PC-9 (cell line): ENCODE measurements at regions of chr18 and their contacts with region 1.

Region 1: DNA sequence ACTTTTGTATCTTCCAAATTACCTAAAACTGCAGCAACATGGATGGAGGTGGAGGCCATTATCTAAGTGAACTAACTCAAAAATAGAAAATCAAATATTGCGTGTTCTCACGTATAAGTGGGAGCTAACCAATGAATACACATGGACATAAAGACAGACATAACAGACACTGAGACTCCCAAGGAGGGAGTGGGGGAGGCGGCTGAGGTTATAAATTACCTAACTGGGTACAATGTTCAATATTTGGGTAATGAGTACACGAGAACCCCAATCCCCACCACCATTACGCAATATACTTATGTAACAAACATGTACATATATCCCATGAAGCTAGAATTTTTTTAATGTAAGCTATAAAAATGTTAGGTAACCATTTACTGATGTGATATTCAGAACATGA is 119.8 kb downstream of the RTTN start:
- DNase-seq: no peak
- H3K4me3 ChIP-seq: no peak overlapping the region
- H3K27ac ChIP-seq: no peak overlapping the region
- H3K4me1 ChIP-seq: no peaks in the 10 kb centered on the region
- H3K27me3 ChIP-seq: no peaks in the 10 kb centered on the region
- CTCF ChIP-seq: no peak

Region 2: GRCh38 chr18:68847219-68847837 is 1238.3 kb before region 1 on chr18:
- CTCF ChIA-PET with region 1: no interaction called
- POLR2A ChIA-PET with region 1: no interaction called
- intact Hi-C with region 1: loop called (anchors 5 kb)
- DNase-seq: peak in 1 of 2 experiments; percentile 37
- H3K4me3 ChIP-seq: no peak overlapping the region
- H3K27ac ChIP-seq: no peak overlapping the region
- H3K4me1 ChIP-seq: no peaks in the 10 kb centered on the region
- H3K27me3 ChIP-seq: no peaks in the 10 kb centered on the region
- CTCF ChIP-seq: peak; percentile 78

Region 3: GRCh38 chr18:69998523-69998987 is 87.1 kb before region 1 on chr18:
- CTCF ChIA-PET with region 1: no interaction called
- POLR2A ChIA-PET with region 1: no interaction called
- intact Hi-C with region 1: no loop called
- DNase-seq: no peak
- H3K4me3 ChIP-seq: no peak overlapping the region
- H3K27ac ChIP-seq: no peak overlapping the region
- H3K4me1 ChIP-seq: no peaks in the 10 kb centered on the region
- H3K27me3 ChIP-seq: no peaks in the 10 kb centered on the region
- CTCF ChIP-seq: no peak

Region 4: DNA sequence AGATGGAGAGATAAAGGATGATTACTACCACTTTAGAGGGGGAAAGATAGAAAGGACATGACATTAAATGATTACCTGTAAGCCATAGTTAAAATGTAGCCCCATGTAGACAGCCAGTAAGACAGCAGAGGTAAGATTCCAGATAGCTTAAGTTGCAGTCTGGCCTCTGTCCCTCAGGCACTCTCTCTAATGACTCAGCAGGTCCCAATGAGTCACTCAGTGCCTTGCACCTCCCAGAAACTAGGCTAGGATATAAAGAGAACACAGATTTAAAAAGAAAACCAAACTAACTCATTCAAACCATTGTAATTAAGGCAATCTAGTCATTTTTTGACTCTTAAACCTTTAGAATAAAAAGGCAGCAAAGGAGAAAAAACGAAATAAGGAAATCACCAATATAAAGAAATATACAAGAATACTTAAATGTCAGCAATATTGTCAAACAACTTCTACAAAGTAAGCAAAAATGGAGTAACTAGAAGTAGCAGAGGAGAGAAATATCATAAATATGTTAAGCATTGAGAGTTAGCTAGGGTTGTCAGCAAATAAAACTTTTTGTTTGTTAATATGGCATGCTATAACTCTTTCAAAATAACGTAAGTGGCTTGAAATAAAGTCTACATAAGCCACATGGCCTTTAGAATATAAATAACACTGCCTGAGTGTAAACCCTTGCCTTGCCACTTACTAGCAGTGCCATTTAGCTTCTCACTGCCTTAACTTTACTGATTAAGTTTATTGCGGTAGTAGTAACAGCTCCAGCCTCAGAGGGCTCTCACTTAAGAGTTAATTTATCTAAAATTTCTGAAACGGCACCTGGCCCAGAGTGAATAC is 251.7 kb after region 1 on chr18:
- CTCF ChIA-PET with region 1: no interaction called
- POLR2A ChIA-PET with region 1: no interaction called
- intact Hi-C with region 1: no loop called
- DNase-seq: peak; percentile 59 to 88
- H3K4me3 ChIP-seq: peak overlapping the region; percentile 15; the same call in 1 of the 2 replicates
- H3K27ac ChIP-seq: peak overlapping the region; percentile 95
- H3K4me1 ChIP-seq: peaks cover 42% of the 10 kb centered on the region
- H3K27me3 ChIP-seq: no peaks in the 10 kb centered on the region
- CTCF ChIP-seq: no peak